ENCODE measurements at regions of chr11 and their contacts with region 1.

Region 1: GRCh38 chr11:128448200-128448886 is 139.0 kb downstream of the ETS1 start:
- DNase-seq: no peak
- ATAC-seq: no peak
- H3K4me3 ChIP-seq: no peak overlapping the region
- H3K4me3 Mint-ChIP-seq: no peak overlapping the region
- H3K27ac ChIP-seq: no peak overlapping the region
- H3K27ac Mint-ChIP-seq: no peak overlapping the region
- H3K4me1 ChIP-seq: peaks cover 11% of the 10 kb centered on the region
- H3K4me1 Mint-ChIP-seq: peaks cover 52% of the 10 kb centered on the region
- H3K27me3 ChIP-seq: no peaks in the 10 kb centered on the region
- H3K27me3 Mint-ChIP-seq: no peaks in the 10 kb centered on the region
- CTCF ChIP-seq: no peak

Region 2: GRCh38 chr11:128431931-128432330 is 16.4 kb before region 1 on chr11:
- CTCF ChIA-PET with region 1: no interaction called
- POLR2A ChIA-PET with region 1: interaction called, 4 read pairs
- intact Hi-C with region 1: loop called in 1 of 2 experiments (anchors 1 kb)
- DNase-seq: no peak
- ATAC-seq: no peak
- H3K4me3 ChIP-seq: no peak overlapping the region
- H3K4me3 Mint-ChIP-seq: no peak overlapping the region
- H3K27ac ChIP-seq: no peak overlapping the region
- H3K27ac Mint-ChIP-seq: no peak overlapping the region
- H3K4me1 ChIP-seq: no peaks in the 10 kb centered on the region
- H3K4me1 Mint-ChIP-seq: peaks cover 12% of the 10 kb centered on the region
- H3K27me3 ChIP-seq: no peaks in the 10 kb centered on the region
- H3K27me3 Mint-ChIP-seq: no peaks in the 10 kb centered on the region
- CTCF ChIP-seq: no peak

Region 3: DNA sequence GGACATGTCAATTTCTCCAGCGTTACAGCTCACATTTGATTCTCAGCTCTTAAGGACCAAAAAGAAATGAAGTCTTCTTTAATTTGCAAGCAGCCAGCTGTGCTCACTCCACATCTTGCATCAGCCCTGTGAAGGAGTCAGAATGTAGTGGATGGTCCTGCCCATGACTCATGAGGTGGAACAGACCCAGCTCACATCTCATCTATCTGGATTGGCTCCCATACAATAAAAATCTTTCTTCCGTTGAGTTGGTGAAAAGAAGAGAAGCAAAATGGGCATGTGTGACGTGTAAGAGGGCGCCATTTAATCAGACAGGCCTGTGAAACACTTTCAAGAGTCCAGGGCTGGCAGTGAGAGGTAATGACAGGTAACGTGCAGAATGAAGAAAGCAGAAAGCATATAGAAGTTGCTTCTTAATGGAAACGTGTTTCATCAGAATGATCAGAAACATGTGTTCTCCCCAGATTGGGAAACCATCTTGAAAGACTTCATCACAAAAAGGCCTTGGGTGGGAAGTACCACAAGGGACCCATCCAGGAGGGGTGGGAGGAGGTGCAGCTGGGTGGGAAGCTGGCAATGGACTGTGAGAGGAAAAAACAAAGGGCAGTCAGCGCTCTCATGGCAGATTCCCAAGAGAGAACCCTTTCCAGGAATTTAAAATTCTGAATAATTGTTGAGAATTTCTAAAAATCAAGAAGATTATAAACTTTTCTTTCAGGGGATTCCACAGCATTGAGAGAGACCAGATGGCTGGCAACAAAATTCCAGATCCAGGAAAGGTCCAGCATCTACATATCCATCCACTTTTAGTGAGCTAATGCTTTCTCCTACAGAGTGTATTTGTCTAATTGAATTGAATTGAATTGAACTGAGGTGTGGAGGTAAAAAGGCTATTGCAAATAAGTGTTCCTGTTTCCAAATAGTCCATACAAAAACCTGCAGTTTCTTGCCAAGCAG is 82.1 kb after region 1 on chr11:
- CTCF ChIA-PET with region 1: no interaction called
- POLR2A ChIA-PET with region 1: no interaction called
- intact Hi-C with region 1: no loop called
- DNase-seq: no peak
- ATAC-seq: no peak
- H3K4me3 ChIP-seq: no peak overlapping the region
- H3K4me3 Mint-ChIP-seq: no peak overlapping the region
- H3K27ac ChIP-seq: no peak overlapping the region
- H3K27ac Mint-ChIP-seq: no peak overlapping the region
- H3K4me1 ChIP-seq: peaks cover 31% of the 10 kb centered on the region
- H3K4me1 Mint-ChIP-seq: peaks cover 58% of the 10 kb centered on the region
- H3K27me3 ChIP-seq: no peaks in the 10 kb centered on the region
- H3K27me3 Mint-ChIP-seq: no peaks in the 10 kb centered on the region
- CTCF ChIP-seq: no peak

Region 4: GRCh38 chr11:128669506-128670270 is 221.3 kb after region 1 on chr11:
- CTCF ChIA-PET with region 1: no interaction called
- POLR2A ChIA-PET with region 1: no interaction called
- intact Hi-C with region 1: no loop called
- DNase-seq: no peak
- ATAC-seq: no peak
- H3K4me3 ChIP-seq: no peak overlapping the region
- H3K4me3 Mint-ChIP-seq: no peak overlapping the region
- H3K27ac ChIP-seq: no peak overlapping the region
- H3K27ac Mint-ChIP-seq: no peak overlapping the region
- H3K4me1 ChIP-seq: no peaks in the 10 kb centered on the region
- H3K4me1 Mint-ChIP-seq: peaks cover 4% of the 10 kb centered on the region
- H3K27me3 ChIP-seq: peaks cover 0 to 3% of the 10 kb centered on the region in 2 experiments
- H3K27me3 Mint-ChIP-seq: peaks cover 3% of the 10 kb centered on the region
- CTCF ChIP-seq: no peak